Activated T-helper 1 cell treated with anti-CD3 and anti-CD28 coated beads, Interleukin-12 subunit alpha, Interleukin-12 subunit beta, Interleukin-2, Interleukin-4 antibody, amounts not matched to agents 30 ng/mL and 10 ng/mL and 1 ng/mL, durations not matched to agents 14 hours and 24 hours and 36 hours (primary cell): ENCODE measurements at regions of chr13 and their contacts with region 1.

Region 1: GRCh38 chr13:40149611-40150274 is 494.3 kb downstream of the COG6 start:
- DNase-seq: no peak
- H3K4me3 Mint-ChIP-seq: no peak overlapping the region
- H3K27ac Mint-ChIP-seq: no peak overlapping the region
- H3K4me1 Mint-ChIP-seq: peaks cover 67% of the 10 kb centered on the region
- H3K27me3 Mint-ChIP-seq: no peaks in the 10 kb centered on the region

Region 2: GRCh38 chr13:40002016-40002415 is 147.7 kb before region 1 on chr13:
- intact Hi-C with region 1: no loop called
- DNase-seq: no peak
- H3K4me3 Mint-ChIP-seq: no peak overlapping the region
- H3K27ac Mint-ChIP-seq: no peak overlapping the region
- H3K4me1 Mint-ChIP-seq: peaks cover 13% of the 10 kb centered on the region
- H3K27me3 Mint-ChIP-seq: peaks cover 5% of the 10 kb centered on the region

Region 3: GRCh38 chr13:40069173-40070044 is 80.3 kb before region 1 on chr13:
- intact Hi-C with region 1: loop called (anchors 2 kb)
- DNase-seq: peak; percentile 45
- H3K4me3 Mint-ChIP-seq: no peak overlapping the region
- H3K27ac Mint-ChIP-seq: no peak overlapping the region
- H3K4me1 Mint-ChIP-seq: peaks cover 37% of the 10 kb centered on the region
- H3K27me3 Mint-ChIP-seq: no peaks in the 10 kb centered on the region

Region 4: GRCh38 chr13:40116008-40116407 is 33.7 kb before region 1 on chr13:
- intact Hi-C with region 1: loop called (anchors 1 kb)
- DNase-seq: peak; percentile 51
- H3K4me3 Mint-ChIP-seq: peak overlapping the region; percentile 24
- H3K27ac Mint-ChIP-seq: peak overlapping the region; percentile 91
- H3K4me1 Mint-ChIP-seq: peaks cover 43% of the 10 kb centered on the region
- H3K27me3 Mint-ChIP-seq: no peaks in the 10 kb centered on the region

Region 5: DNA sequence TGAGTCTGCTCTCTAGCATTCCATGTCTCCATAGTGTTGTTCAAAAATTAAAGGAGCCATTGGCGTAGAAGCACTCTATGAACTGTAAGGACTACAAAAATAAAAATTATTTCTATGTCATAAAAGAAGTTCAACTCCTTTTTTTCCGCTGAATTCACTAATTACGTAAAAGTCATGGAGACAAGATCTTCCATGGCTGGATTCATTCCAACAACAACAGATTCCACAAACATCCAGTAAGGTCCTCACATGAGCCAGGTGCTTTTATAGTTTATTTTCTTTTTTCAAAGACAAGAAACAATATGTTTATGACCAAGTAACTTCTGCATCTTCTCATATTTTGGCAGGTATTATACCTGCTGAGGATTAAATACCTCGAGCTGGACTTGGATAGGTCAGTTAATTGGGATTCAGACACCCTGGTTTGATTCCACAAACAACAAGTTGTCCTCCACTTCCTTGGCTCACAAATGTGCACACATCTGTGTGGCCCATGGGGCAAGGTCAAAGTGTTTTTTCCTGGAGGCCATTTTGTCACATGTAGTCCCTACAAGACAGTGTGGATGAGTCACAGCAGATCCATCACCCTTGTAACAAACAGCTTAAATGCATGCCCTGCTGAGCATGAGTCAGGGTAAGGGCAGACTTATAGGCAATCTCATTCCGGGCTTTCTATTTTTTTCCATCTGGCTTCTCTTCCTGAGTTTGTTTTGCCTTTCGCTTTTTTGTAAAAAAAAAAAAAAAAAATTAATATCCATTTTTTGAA is 18.7 kb before region 1 on chr13:
- intact Hi-C with region 1: loop called (anchors 1 kb)
- DNase-seq: no peak
- H3K4me3 Mint-ChIP-seq: no peak overlapping the region
- H3K27ac Mint-ChIP-seq: peak overlapping the region; percentile 12
- H3K4me1 Mint-ChIP-seq: peaks cover 63% of the 10 kb centered on the region
- H3K27me3 Mint-ChIP-seq: no peaks in the 10 kb centered on the region

Region 6: DNA sequence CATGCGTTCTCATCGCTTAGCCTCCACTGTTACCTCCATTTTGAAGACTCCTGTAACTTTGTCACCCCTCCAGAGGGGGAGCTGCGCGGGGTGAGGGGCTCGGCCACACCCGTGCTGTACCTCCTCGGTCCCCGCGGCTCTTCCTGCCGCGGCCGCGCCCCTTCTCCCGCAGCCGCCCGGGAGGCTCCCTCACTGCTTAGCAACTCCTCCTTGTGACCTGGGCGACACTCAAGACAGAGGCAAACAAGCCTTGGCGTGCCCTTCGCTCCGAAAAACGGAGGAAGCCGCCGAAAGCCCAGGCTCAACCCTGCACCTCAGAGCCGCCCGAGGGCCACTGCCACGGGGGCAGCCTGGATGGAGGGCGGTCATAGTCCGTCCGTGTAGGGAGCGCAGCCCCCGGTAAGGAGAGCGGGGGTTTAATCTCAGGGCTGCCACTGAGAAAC is 22.4 kb after region 1 on chr13:
- intact Hi-C with region 1: no loop called
- DNase-seq: no peak
- H3K4me3 Mint-ChIP-seq: no peak overlapping the region
- H3K27ac Mint-ChIP-seq: no peak overlapping the region
- H3K4me1 Mint-ChIP-seq: peaks cover 28% of the 10 kb centered on the region
- H3K27me3 Mint-ChIP-seq: peaks cover 2% of the 10 kb centered on the region

Region 7: GRCh38 chr13:40221460-40222201 is 71.9 kb after region 1 on chr13:
- intact Hi-C with region 1: loop called (anchors 1 kb)
- DNase-seq: no peak
- H3K4me3 Mint-ChIP-seq: peak overlapping the region; percentile 37
- H3K27ac Mint-ChIP-seq: peak overlapping the region; percentile 69
- H3K4me1 Mint-ChIP-seq: peaks cover 43% of the 10 kb centered on the region
- H3K27me3 Mint-ChIP-seq: no peaks in the 10 kb centered on the region